Esophagus muscularis mucosa (tissue), 4 donors: ENCODE measurements at regions of chr11 and their contacts with region 1.

Region 1: GRCh38 chr11:114148013-114148382 is 88.5 kb downstream of the ZBTB16 start:
- DNase-seq: no peak
- H3K4me3 ChIP-seq: no peak overlapping the region
- H3K27ac ChIP-seq: peak overlapping the region; percentile 72 to 100 (median 88)
- H3K4me1 ChIP-seq: peaks cover 96 to 100% (median 99%) of the 10 kb centered on the region in 4 donors
- H3K27me3 ChIP-seq: no peaks in the 10 kb centered on the region
- CTCF ChIP-seq: no peak
- EP300 ChIP-seq: no peak
- POLR2A ChIP-seq: no peak

Region 2: DNA sequence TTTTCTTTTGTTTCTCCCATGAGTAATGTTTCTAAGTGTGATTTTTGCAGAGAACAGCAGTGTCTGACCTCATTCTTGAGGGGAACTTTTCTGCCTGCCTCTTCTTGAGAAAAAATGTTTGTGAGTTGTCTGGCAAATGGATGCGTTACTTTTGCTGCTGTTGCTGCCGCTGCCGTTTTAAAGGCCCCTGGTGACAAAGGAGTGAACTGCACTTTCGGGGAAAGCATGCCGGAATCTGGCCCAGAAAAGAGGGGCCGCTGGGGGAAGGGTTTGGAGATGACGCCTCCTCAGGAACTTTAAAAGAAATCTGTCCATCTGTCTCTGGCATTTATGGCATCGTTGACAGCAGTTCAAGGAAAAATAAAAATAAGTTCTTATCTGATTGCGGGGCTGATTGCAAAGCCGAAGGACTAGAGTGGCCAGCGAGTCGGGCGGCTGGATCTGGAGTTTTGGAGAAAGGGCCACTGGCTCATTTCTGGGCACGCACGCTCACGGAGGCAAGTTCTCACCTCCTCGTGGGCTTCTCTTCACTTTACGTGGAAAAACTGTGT is 72.0 kb before region 1 on chr11:
- intact Hi-C with region 1: no loop called
- DNase-seq: no peak
- H3K4me3 ChIP-seq: peak overlapping the region; percentile 17 to 45 (median 30)
- H3K27ac ChIP-seq: peak overlapping the region; percentile 0 to 66 (median 26)
- H3K4me1 ChIP-seq: peaks cover 99 to 100% (median 100%) of the 10 kb centered on the region in 4 donors
- H3K27me3 ChIP-seq: no peaks in the 10 kb centered on the region
- CTCF ChIP-seq: peak; percentile 26 to 67 (median 44)
- EP300 ChIP-seq: no peak
- POLR2A ChIP-seq: no peak

Region 3: DNA sequence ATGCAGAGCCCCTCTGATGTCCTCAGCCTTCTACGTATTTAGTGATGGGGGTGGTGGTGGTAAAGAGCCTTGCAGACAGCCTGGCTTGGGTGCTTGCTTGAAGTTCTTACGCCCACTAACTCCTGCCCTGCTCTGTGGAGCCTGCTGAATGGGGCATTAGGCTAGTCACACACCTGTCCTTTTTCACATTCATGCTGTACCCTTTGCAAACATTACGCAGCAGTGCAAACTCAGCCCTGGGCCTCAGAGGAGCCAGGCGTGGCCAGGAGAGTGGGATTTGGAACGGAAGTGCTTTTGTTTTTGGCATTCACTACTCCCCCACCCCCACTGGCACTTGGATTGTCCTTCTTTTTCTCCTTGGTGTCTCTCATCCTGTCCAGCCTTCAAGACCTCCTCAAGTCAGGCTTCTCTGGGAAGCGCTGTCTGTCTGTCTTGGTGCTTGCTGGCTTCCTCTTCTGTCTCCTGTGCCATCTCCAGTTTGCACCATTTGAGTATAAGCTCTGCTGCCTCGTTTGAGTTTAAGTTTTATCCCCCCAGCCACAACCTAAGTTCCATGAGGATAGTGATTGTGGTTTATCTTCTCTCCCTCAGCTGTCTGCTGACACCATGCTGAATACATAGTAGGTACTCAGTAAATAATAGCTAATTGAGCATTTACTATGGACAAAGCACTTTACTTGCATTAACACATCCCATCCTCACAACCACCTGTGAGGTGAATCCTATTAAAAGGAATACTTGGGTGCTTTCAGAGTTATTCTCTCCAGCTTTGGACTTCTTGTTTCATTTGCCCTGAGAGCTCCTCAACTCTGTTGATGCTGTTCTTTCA is 61.8 kb before region 1 on chr11:
- intact Hi-C with region 1: loop called (anchors 5 kb)
- DNase-seq: no peak
- H3K4me3 ChIP-seq: no peak overlapping the region
- H3K27ac ChIP-seq: peak overlapping the region in 1 of 4 donors; percentile 1
- H3K4me1 ChIP-seq: peaks cover 100% of the 10 kb centered on the region in 4 donors
- H3K27me3 ChIP-seq: no peaks in the 10 kb centered on the region
- CTCF ChIP-seq: no peak
- EP300 ChIP-seq: no peak
- POLR2A ChIP-seq: no peak